Endothelial cell of umbilical vein (primary cell): ENCODE measurements at regions of chr2 and their contacts with region 1.

Region 1: GRCh38 chr2:223970343-223971128 is 13.3 kb downstream of the MRPL44 start:
- DNase-seq: peak; percentile 76
- H3K4me3 ChIP-seq: no peak overlapping the region
- H3K27ac ChIP-seq: no peak overlapping the region
- H3K4me1 ChIP-seq: no peaks in the 10 kb centered on the region
- H3K27me3 ChIP-seq: no peaks in the 10 kb centered on the region
- CTCF ChIP-seq: peak; percentile 65 to 68
- POLR2A ChIP-seq: no peak

Region 2: DNA sequence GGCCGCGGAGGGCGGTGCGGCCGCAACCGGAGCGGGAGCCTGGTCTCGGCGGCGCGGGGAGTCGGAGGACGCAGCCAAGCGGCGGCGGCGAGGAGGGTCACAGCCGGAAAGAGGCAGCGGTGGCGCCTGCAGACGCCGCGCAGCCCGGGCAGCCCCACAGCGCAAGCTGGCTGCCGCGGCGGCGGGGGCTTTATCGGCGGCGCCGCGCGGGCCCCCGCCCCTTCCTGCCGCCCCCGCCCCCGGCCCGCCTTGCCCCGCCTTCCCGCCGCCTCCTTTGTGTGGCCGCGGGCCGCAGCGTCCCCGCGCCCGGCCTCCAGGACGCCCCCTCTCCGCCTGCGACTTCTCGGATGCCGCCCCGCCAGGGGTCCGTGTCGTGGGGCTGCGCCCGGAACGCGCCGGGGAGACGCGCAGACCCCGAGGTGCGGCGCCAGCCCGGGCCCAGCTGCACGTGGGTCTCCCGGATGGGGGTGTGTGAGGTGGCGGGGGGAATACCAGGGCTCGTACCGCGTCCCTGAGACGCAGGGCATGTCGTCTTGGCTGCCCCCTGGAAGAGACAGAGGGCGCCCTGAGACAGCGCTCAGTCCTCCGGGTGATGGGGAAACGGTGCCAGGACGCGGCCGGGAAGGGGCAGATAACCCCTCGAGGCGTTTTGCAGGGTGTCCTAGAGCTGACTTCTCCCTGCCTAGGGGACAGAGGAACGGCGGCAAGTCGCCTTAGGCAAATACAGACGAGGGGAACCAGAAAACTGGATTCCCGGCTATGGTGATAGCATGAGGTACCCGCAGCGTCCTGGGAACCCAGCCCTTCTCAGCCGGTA is 68.8 kb after region 1 on chr2 and contains the start of gene SERPINE2:
- CTCF ChIA-PET with region 1: interaction called, 9 read pairs
- POLR2A ChIA-PET with region 1: no interaction called
- dilution Hi-C with region 1: no loop called
- intact Hi-C with region 1: loop called (anchors 1 kb)
- DNase-seq: peak; percentile 41
- H3K4me3 ChIP-seq: peak within 1 kb of the TSS; percentile 32 to 73 (median 41)
- H3K27ac ChIP-seq: no peak within 1 kb of the TSS
- H3K4me1 ChIP-seq: peaks cover 6% of the 10 kb centered on the region
- H3K27me3 ChIP-seq: peaks cover 29 to 41% of the 10 kb centered on the region in 2 experiments
- CTCF ChIP-seq: no peak
- POLR2A ChIP-seq: no peak
- total RNA-seq, gene SERPINE2: 8.8 and 15.5 TPM in 2 replicates

Region 3: DNA sequence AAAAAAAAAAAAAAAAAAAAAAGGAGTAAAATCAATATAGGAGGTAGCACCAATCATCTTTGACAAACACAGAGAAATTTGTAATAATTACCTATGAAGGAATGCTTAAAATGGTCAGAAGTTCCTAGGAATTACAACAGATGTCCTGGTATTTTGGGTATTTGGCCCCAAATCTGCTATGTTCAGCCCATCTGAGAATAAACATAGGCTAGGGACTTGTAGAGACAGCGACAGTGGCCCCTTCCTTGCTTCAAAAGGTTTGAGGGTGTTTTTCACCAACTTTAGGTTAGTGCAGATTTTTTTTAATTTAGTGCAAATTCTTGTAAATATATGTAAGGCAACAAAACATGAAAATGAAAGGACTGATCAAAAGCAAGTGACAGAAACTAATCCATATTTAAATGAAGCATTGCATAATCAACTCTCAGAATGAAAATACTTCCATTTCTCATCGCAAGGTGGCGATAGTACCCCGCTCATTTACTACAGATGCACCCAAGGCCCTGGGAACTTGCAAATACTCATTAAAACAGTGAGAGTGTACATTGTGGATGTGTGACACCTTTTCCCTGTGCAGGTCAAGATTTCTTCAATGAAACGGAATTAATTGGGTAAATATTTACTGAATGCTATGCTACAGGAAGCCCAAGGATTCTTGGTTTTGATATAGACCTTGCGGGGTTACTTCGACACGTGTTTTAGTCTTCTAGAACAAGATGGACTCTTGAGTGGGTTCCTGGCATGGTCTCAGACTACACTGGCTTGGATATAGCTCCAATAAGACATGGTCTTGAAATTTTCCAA is 386.8 kb after region 1 on chr2:
- CTCF ChIA-PET with region 1: interaction called, 50 read pairs
- POLR2A ChIA-PET with region 1: no interaction called
- dilution Hi-C with region 1: no loop called
- intact Hi-C with region 1: loop called (anchors 2 kb)
- DNase-seq: peak; percentile 82
- H3K4me3 ChIP-seq: no peak overlapping the region
- H3K27ac ChIP-seq: no peak overlapping the region
- H3K4me1 ChIP-seq: no peaks in the 10 kb centered on the region
- H3K27me3 ChIP-seq: peaks cover 0 to 3% of the 10 kb centered on the region in 2 experiments
- CTCF ChIP-seq: peak; percentile 44 to 68
- POLR2A ChIP-seq: no peak

Region 4: DNA sequence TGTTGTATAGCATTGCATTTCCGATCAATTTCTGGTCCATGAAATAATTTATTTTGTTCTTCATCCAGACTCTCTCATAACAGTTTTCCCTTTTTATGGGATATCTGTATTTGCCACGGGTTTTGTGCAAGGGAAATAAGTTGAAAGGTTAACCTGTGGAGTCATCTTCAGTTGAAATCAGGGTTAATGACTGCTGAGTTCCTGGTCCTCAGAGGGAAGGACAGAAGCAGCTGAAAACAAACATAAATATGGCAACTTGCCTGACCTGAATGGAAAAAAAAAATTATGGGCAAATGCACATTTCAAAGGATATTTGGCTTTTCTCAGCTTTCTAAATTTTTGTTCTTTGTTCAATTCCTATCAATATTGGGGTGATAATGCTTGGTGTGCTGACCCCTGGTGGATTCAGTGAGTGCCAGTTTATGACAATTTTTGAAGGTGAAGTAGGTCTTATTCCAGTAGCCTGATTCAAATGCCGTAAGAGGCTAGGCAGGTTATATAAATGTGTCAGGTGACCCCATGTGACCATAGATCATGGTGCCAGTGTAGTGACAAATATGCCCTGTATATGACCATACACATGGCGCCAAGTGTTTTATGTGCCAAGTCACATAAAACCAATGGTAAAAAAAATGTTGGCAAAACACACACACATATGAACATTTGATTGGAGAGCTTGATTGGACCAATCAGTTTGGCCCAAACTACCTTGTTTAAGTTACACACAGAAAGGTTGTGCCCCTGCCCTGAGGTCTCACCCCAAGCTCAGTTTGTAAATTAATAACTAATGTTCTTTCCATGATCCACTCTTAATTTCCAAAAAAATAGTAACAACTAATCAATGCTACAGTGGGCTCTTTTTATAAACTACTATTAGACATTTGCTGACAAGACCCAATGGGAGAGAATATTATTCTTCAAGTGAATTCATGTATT is 478.9 kb after region 1 on chr2:
- CTCF ChIA-PET with region 1: interaction called, 12 read pairs
- POLR2A ChIA-PET with region 1: no interaction called
- dilution Hi-C with region 1: no loop called
- intact Hi-C with region 1: loop called (anchors 2 kb)
- DNase-seq: peak; percentile 85
- H3K4me3 ChIP-seq: no peak overlapping the region
- H3K27ac ChIP-seq: no peak overlapping the region
- H3K4me1 ChIP-seq: peaks cover 8% of the 10 kb centered on the region
- H3K27me3 ChIP-seq: no peaks in the 10 kb centered on the region
- CTCF ChIP-seq: peak; percentile 52 to 59
- POLR2A ChIP-seq: no peak